B cell (primary cell): ENCODE measurements at regions of chr21 and their contacts with region 1.

Region 1: DNA sequence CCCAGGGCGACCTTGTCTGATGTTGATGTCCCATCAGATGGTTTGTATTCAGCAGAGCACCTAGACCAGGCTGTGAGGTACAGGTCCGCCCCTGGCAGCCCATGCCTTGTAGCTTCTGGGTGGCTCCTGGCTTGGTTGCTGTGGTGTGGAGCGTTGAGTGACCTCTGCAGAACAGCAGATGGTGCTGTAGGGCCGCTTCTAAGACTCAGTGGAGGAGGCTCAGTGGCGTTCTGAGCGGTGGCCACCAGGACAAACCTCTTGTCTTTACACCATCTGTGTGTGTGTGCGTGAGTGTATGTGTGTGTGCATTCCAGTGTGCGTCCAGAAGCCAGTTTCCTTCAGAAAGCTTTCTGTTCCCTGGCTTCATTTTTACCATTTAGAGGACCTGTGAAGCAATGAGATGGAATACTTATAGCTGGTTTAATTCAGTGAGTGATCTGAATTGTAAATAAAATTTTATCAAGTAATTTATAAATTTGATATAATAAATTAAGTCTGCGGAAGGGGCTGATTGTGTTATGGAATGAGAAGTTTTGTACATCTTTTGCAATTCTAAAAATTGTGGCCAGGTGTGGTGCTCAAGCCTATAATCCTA is 66.1 kb downstream of the ADARB1 start:
- DNase-seq: peak; percentile 80
- ATAC-seq: peak; percentile 93
- H3K4me3 ChIP-seq: no peak overlapping the region
- H3K4me3 Mint-ChIP-seq: no peak overlapping the region
- H3K27ac ChIP-seq: no peak overlapping the region
- H3K27ac Mint-ChIP-seq: peak overlapping the region; percentile 57
- H3K4me1 ChIP-seq: peaks cover 0 to 8% of the 10 kb centered on the region in 2 donors
- H3K4me1 Mint-ChIP-seq: peaks cover 17% of the 10 kb centered on the region
- H3K27me3 ChIP-seq: no peaks in the 10 kb centered on the region
- H3K27me3 Mint-ChIP-seq: no peaks in the 10 kb centered on the region
- CTCF ChIP-seq: peak; percentile 71

Region 2: GRCh38 chr21:44892536-44893277 is 247.7 kb before region 1 on chr21:
- CTCF ChIA-PET with region 1: interaction called, 10 read pairs
- POLR2A ChIA-PET with region 1: no interaction called
- intact Hi-C with region 1: no loop called
- DNase-seq: peak; percentile 82
- ATAC-seq: peak; percentile 89
- H3K4me3 ChIP-seq: no peak overlapping the region
- H3K4me3 Mint-ChIP-seq: no peak overlapping the region
- H3K27ac ChIP-seq: no peak overlapping the region
- H3K27ac Mint-ChIP-seq: no peak overlapping the region
- H3K4me1 ChIP-seq: peaks cover 3 to 16% of the 10 kb centered on the region in 2 donors
- H3K4me1 Mint-ChIP-seq: peaks cover 27% of the 10 kb centered on the region
- H3K27me3 ChIP-seq: no peaks in the 10 kb centered on the region
- H3K27me3 Mint-ChIP-seq: no peaks in the 10 kb centered on the region
- CTCF ChIP-seq: peak; percentile 89

Region 3: DNA sequence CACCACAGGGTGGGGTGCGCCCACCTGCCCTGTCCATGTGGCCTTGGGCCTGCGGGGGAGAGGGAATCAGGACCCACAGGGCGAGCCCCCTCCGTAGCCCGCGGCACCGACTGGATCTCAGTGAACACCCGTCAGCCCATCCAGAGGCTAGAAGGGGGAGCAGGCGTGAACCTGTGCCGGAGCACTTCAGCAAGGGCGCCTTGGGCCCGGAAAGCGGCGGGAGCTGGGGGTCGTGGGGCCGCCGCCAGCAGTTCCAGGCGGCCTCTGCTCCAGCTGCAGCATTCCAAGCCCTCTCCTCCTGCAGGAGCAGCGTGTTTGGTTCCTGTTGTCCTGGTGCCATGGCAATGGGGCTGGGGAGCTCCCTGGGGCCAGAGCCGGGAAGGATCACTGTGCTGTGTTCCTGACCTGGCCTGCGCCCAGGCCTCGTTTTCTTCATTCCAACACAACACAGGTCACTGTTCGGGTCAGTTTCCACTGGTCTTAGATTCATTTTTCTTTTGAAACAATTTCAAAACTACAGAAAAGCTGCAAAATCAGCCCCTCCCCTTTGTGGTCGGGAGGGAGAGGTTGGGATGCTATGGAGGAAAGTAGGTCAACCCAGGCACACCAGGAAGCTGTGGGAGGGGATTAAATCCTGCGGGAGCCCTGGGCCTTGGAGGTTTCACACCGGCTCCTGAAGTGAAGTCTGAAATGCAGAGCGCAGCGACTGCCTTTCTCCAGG is 181.8 kb before region 1 on chr21:
- CTCF ChIA-PET with region 1: interaction called, 355 read pairs
- POLR2A ChIA-PET with region 1: no interaction called
- intact Hi-C with region 1: no loop called
- DNase-seq: no peak
- ATAC-seq: no peak
- H3K4me3 ChIP-seq: no peak overlapping the region
- H3K4me3 Mint-ChIP-seq: no peak overlapping the region
- H3K27ac ChIP-seq: no peak overlapping the region
- H3K27ac Mint-ChIP-seq: no peak overlapping the region
- H3K4me1 ChIP-seq: no peaks in the 10 kb centered on the region
- H3K4me1 Mint-ChIP-seq: peaks cover 3% of the 10 kb centered on the region
- H3K27me3 ChIP-seq: no peaks in the 10 kb centered on the region
- H3K27me3 Mint-ChIP-seq: no peaks in the 10 kb centered on the region
- CTCF ChIP-seq: no peak

Region 4: GRCh38 chr21:45109831-45110492 is 30.5 kb before region 1 on chr21:
- CTCF ChIA-PET with region 1: interaction called, 39 read pairs
- POLR2A ChIA-PET with region 1: no interaction called
- intact Hi-C with region 1: no loop called
- DNase-seq: peak; percentile 90
- ATAC-seq: peak; percentile 83
- H3K4me3 ChIP-seq: peak overlapping the region; percentile 22 to 60 (median 42)
- H3K4me3 Mint-ChIP-seq: peak overlapping the region; percentile 78
- H3K27ac ChIP-seq: peak overlapping the region; percentile 83 to 94
- H3K27ac Mint-ChIP-seq: peak overlapping the region; percentile 75
- H3K4me1 ChIP-seq: peaks cover 91 to 94% of the 10 kb centered on the region in 2 donors
- H3K4me1 Mint-ChIP-seq: peaks cover 91% of the 10 kb centered on the region
- H3K27me3 ChIP-seq: no peaks in the 10 kb centered on the region
- H3K27me3 Mint-ChIP-seq: no peaks in the 10 kb centered on the region
- CTCF ChIP-seq: no peak

Region 5: GRCh38 chr21:45152265-45152746 is 11.9 kb after region 1 on chr21:
- CTCF ChIA-PET with region 1: interaction called, 36 read pairs
- POLR2A ChIA-PET with region 1: no interaction called
- intact Hi-C with region 1: no loop called
- DNase-seq: peak; percentile 82
- ATAC-seq: peak; percentile 97
- H3K4me3 ChIP-seq: no peak overlapping the region
- H3K4me3 Mint-ChIP-seq: peak overlapping the region; percentile 73
- H3K27ac ChIP-seq: peak overlapping the region; percentile 10 to 69
- H3K27ac Mint-ChIP-seq: peak overlapping the region; percentile 18
- H3K4me1 ChIP-seq: peaks cover 36% of the 10 kb centered on the region in 2 donors
- H3K4me1 Mint-ChIP-seq: peaks cover 46% of the 10 kb centered on the region
- H3K27me3 ChIP-seq: no peaks in the 10 kb centered on the region
- H3K27me3 Mint-ChIP-seq: no peaks in the 10 kb centered on the region
- CTCF ChIP-seq: peak; percentile 64

Region 6: GRCh38 chr21:45287438-45288391 is 147.3 kb after region 1 on chr21 and contains the start of gene POFUT2:
- CTCF ChIA-PET with region 1: interaction called, 9 read pairs
- POLR2A ChIA-PET with region 1: no interaction called
- intact Hi-C with region 1: loop called (anchors 1 kb)
- DNase-seq: peak; percentile 98
- ATAC-seq: peak; percentile 88
- H3K4me3 ChIP-seq: peak within 1 kb of the TSS in 4 of 5 experiments; percentile 62 to 83 (median 74)
- H3K4me3 Mint-ChIP-seq: peak within 1 kb of the TSS; percentile 90
- H3K27ac ChIP-seq: peak within 1 kb of the TSS; percentile 47 to 82
- H3K27ac Mint-ChIP-seq: peak within 1 kb of the TSS; percentile 96
- H3K4me1 ChIP-seq: peaks cover 10 to 19% of the 10 kb centered on the region in 2 donors
- H3K4me1 Mint-ChIP-seq: peaks cover 15% of the 10 kb centered on the region
- H3K27me3 ChIP-seq: no peaks in the 10 kb centered on the region
- H3K27me3 Mint-ChIP-seq: no peaks in the 10 kb centered on the region
- CTCF ChIP-seq: no peak
- total RNA-seq, gene POFUT2: 38.3 and 44.5 TPM in 2 replicates

Region 7: GRCh38 chr21:45596704-45597318 is 456.4 kb after region 1 on chr21:
- CTCF ChIA-PET with region 1: no interaction called
- POLR2A ChIA-PET with region 1: no interaction called
- intact Hi-C with region 1: loop called (anchors 5 kb)
- DNase-seq: peak; percentile 84
- ATAC-seq: peak; percentile 85
- H3K4me3 ChIP-seq: no peak overlapping the region
- H3K4me3 Mint-ChIP-seq: no peak overlapping the region
- H3K27ac ChIP-seq: no peak overlapping the region
- H3K27ac Mint-ChIP-seq: no peak overlapping the region
- H3K4me1 ChIP-seq: peaks cover 15 to 18% of the 10 kb centered on the region in 2 donors
- H3K4me1 Mint-ChIP-seq: peaks cover 17% of the 10 kb centered on the region
- H3K27me3 ChIP-seq: peaks cover 0 to 3% (median 0%) of the 10 kb centered on the region in 4 experiments
- H3K27me3 Mint-ChIP-seq: peaks cover 35% of the 10 kb centered on the region
- CTCF ChIP-seq: peak; percentile 92